ENCODE measurements at regions of chr17 and their contacts with region 1.

Region 1: GRCh38 chr17:80101011-80101945 is at the start of gene GAA:
- DNase-seq: peak; percentile 82
- ATAC-seq: peak; percentile 76
- H3K4me3 Mint-ChIP-seq: peak within 1 kb of the TSS; percentile 92
- H3K27ac Mint-ChIP-seq: peak within 1 kb of the TSS; percentile 68; the same call in 1 of the 2 replicates
- H3K4me1 Mint-ChIP-seq: peaks cover 17% of the 10 kb centered on the region
- H3K27me3 Mint-ChIP-seq: peaks cover 12% of the 10 kb centered on the region
- CTCF ChIP-seq: peak; percentile 65
- total RNA-seq, gene GAA: 91.6 to 97.7 TPM (median 93.9 TPM) in 3 replicates

Region 2: DNA sequence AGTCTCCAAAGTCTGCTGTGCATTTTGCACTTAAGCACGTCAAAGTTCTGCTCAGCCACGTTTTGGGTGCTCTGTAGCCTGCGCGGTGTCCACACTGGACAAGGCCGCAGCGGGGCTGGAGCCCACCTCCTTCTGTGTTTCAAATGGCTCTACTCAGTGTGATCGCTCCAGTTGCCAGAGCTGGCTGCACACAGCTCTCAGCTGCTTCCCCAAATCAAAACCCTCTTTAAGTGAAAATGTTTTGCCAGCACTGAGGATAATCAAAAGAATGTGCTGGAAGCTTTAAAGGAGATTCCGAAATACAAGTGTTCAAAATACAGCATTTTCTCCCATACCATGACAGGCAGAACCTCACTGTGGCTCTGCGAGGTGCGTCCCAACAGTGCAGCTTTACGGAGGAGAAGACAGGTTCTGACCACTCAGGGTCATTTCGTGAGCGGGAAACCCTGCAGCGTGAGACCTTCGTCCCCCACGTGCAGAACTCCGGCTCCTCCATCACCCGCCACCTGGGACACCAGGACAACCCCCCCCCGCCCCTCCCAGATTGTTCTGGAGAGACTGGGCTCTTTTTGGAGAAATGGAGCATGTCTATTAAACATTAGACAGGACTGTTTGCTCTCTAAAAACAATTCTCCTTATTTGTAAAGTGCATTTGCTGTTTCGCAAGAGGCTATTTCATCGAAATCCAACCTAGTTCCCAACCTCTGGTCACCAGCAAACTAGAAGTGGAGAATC is 82.2 kb before region 1 on chr17:
- CTCF ChIA-PET with region 1: no interaction called
- POLR2A ChIA-PET with region 1: no interaction called
- DNase-seq: no peak
- ATAC-seq: no peak
- H3K4me3 Mint-ChIP-seq: no peak overlapping the region
- H3K27ac Mint-ChIP-seq: 0 out of 2 replicates have a peak overlapping the region, but pooled peaks have one; percentile 36
- H3K4me1 Mint-ChIP-seq: peaks cover 12% of the 10 kb centered on the region
- H3K27me3 Mint-ChIP-seq: no peaks in the 10 kb centered on the region
- CTCF ChIP-seq: no peak

Region 3: DNA sequence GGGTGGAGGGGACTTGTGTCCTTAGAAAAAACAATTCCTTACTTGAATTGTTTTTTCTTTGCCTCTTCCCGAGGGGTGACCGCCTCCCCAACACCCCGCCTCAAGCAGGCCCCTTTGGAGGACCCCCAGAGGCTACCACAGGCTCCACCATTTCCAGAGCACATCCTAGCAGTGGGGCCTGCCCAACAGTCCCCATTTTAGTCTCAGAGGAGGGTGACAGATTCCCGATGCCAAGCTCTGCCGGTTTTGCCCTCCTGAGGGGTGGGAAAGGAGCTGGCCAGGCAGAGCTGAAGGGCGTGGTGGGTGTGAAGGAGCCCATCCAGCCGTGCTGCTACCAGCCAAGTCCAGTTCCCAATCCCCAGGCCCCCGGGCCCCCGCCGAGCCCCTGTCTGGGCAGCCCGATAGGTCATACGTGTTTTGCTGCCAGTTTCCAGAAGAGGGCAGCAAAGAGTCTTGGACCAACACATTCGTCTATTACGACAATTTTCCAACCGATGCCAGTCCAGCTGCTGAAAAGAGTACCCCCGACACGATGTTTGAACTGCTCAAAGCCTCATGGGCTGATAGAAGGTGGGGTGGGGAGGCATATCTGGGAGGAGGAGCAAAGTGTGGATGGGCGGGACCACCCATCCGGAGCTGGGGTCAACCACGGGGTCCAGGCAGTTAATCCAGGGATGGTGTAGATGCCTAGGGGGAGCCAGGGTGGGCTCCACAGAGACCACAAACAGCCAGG is 18.7 kb before region 1 on chr17:
- CTCF ChIA-PET with region 1: interaction called, 42 read pairs
- POLR2A ChIA-PET with region 1: no interaction called
- DNase-seq: peak; percentile 85
- ATAC-seq: peak; percentile 81
- H3K4me3 Mint-ChIP-seq: no peak overlapping the region
- H3K27ac Mint-ChIP-seq: no peak overlapping the region
- H3K4me1 Mint-ChIP-seq: peaks cover 8% of the 10 kb centered on the region; the same call in 1 of the 2 replicates
- H3K27me3 Mint-ChIP-seq: no peaks in the 10 kb centered on the region
- CTCF ChIP-seq: peak; percentile 40; the same call in 1 of the 2 replicates

Region 4: DNA sequence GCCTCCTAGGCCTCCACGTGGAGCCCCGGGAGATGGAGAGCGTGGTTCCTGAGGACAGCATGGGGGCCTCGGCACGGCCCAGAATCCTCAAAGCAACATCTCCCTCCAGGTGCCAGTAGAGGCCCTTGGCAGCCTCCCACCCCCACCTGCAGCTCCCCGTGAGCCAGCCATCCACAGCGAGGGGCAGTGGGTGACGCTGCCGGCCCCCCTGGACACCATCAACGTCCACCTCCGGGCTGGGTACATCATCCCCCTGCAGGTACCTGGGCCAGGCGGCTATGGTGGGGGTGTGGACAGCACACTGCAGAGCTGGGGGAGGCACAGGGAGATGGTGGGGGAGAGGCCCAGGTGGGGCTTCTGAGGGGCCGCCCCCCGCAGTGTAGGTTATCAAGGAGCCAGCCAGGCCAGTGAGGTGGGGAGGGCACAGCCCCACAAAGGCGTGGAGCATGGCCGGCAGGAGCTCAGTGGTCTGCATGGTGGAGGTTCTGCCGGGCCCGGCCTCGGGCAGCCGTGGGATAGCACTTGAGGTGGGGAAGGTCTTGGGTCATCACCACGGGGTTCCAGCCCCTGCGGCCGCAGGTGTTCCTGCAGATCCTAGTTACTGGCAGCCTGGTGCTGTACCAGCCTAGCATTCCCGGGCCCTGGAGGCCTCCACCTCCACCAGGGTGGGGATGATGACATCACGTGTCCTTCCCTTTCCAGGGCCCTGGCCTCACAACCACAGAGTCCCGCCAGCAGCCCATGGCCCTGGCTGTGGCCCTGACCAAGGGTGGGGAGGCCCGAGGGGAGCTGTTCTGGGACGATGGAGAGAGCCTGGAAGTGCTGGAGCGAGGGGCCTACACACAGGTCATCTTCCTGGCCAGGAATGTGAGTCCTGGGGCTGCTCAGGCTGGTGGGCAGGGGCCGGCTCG is 16.5 kb after region 1 on chr17:
- CTCF ChIA-PET with region 1: interaction called, 107 read pairs
- POLR2A ChIA-PET with region 1: interaction called, 3 read pairs
- DNase-seq: no peak
- ATAC-seq: no peak
- H3K4me3 Mint-ChIP-seq: no peak overlapping the region
- H3K27ac Mint-ChIP-seq: 0 out of 2 replicates have a peak overlapping the region, but pooled peaks have one; percentile 11
- H3K4me1 Mint-ChIP-seq: peaks cover 2% of the 10 kb centered on the region; the same call in 1 of the 2 replicates
- H3K27me3 Mint-ChIP-seq: no peaks in the 10 kb centered on the region; the same call in 1 of the 2 replicates
- CTCF ChIP-seq: no peak

Region 5: DNA sequence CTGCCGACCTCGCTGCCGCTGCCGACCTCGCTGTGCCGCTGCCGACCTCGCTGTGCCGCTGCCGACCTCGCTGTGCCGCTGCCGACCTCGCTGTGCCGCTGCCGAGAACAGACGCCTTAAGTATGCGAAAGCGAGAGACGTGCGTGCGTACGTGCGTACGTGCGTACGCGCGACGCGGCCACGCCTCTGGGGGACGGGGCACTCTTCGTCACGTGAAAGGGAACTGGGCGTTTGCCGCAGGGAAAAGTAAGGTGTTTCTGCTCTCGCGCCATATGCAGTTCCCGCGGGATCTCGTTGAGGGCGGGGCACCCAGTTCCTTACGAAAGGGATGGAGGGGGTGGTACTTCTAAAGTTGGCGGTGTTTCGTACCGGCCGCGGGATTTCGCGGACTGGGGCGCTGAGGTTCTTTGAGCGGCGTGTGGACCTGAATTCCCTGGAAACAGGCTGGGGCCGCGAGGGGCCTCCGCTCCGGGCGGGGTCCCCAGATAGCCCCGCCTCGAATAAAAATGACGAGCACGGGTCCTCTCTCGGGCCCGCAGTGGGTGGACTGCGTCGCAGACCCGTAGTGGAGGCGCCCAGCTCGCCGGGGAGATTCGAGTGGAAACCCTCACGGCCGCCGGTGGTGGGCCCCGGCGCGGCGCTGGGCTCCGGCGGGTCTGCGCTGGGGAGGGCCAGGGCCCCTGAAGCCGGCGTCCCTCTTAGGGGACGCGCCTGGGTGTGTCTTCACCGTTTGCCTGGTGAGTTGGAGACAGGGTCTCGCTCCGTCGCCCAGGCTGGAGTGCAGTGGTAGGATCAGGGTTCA is 46.0 kb after region 1 on chr17 and contains the start of gene EIF4A3:
- CTCF ChIA-PET with region 1: interaction called, 13 read pairs
- POLR2A ChIA-PET with region 1: interaction called, 4 read pairs
- DNase-seq: peak; percentile 99
- ATAC-seq: peak; percentile 92
- H3K4me3 Mint-ChIP-seq: peak within 1 kb of the TSS; percentile 77
- H3K27ac Mint-ChIP-seq: peak within 1 kb of the TSS; percentile 90
- H3K4me1 Mint-ChIP-seq: peaks cover 29% of the 10 kb centered on the region
- H3K27me3 Mint-ChIP-seq: peaks cover under 1% of the 10 kb centered on the region
- CTCF ChIP-seq: no peak
- total RNA-seq, gene EIF4A3: 142 to 160 TPM (median 142 TPM) in 3 replicates

Measured in WTC11 (cell line).